Common myeloid progenitor, CD34-positive (primary cell): ENCODE measurements at regions of chr5 and their contacts with region 1.

Region 1: DNA sequence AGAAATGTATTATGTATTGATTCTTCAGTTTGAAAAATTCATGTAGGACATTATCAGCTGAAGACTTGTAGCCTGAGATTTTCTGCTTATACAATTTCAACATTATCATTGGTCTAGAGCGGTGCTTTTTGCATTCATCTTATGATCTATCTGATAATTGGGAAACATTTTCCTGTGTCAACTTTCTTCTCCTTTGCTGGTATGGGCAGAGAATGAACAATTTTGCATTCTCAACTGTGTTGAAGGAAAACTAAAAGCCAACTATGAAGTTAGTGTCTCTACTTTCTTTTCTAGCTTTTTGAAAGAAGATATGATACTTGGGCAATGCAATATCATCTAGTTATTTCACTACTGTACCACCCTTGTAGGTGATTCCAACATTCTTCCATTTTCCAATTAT is 10.3 kb downstream of the ZFR start:
- DNase-seq: no peak
- H3K4me3 ChIP-seq: no peak overlapping the region
- H3K27ac ChIP-seq: no peak overlapping the region
- H3K4me1 ChIP-seq: peaks cover 0 to 5% (median 0%) of the 10 kb centered on the region in 4 experiments
- H3K27me3 ChIP-seq: no peaks in the 10 kb centered on the region

Region 2: GRCh38 chr5:32419791-32420190 is 14.4 kb before region 1 on chr5:
- CTCF ChIA-PET with region 1: interaction called, 10 read pairs
- POLR2A ChIA-PET with region 1: no interaction called
- DNase-seq: no peak
- H3K4me3 ChIP-seq: no peak overlapping the region
- H3K27ac ChIP-seq: no peak overlapping the region
- H3K4me1 ChIP-seq: peaks cover 0 to 3% (median 1%) of the 10 kb centered on the region in 4 experiments
- H3K27me3 ChIP-seq: no peaks in the 10 kb centered on the region